Activated CD4-positive, alpha-beta memory T cell treated with anti-CD3 and anti-CD28 coated beads for 36 hours (primary cell): ENCODE measurements at regions of chr12 and their contacts with region 1.

Region 1: DNA sequence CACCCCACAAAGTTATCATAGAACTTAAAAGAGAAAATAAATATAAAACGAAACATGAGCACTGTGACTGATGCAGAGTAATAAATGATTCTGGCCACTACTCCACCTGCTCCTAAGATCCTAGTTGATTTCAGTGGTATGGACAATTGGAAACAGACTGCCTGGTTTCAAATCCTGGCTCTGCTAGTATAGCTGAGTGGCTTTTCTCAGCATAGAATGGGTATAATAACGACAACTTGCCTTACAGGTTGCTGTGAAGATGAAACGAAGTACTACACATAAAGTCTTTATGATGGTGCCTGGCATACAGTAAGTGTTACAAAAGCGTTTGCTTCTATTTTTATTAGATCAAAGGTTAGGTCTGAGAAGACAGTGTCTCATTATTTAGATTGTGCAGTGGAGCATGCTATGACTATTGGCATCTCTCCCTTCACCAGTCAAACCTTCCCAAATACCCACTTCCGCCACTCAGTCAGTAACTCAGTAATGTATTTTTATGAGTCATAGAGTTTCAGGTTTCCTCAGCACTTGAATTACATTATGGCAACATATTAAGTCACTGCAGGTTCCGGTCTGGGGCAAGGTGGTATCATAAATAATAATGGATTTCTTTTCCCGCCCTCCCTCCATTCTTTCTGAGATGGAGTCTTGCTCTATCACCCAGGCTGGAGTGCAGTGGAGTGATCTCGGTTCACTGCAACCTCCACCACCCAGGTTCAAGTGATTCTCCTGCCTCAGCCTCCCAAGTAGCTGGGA is 29.7 kb upstream of the NR2C1 start:
- DNase-seq: peak; percentile 68
- H3K4me3 Mint-ChIP-seq: no peak overlapping the region
- H3K27ac Mint-ChIP-seq: peak overlapping the region; percentile 63
- H3K4me1 Mint-ChIP-seq: peaks cover 19% of the 10 kb centered on the region
- H3K27me3 Mint-ChIP-seq: no peaks in the 10 kb centered on the region

Region 2: DNA sequence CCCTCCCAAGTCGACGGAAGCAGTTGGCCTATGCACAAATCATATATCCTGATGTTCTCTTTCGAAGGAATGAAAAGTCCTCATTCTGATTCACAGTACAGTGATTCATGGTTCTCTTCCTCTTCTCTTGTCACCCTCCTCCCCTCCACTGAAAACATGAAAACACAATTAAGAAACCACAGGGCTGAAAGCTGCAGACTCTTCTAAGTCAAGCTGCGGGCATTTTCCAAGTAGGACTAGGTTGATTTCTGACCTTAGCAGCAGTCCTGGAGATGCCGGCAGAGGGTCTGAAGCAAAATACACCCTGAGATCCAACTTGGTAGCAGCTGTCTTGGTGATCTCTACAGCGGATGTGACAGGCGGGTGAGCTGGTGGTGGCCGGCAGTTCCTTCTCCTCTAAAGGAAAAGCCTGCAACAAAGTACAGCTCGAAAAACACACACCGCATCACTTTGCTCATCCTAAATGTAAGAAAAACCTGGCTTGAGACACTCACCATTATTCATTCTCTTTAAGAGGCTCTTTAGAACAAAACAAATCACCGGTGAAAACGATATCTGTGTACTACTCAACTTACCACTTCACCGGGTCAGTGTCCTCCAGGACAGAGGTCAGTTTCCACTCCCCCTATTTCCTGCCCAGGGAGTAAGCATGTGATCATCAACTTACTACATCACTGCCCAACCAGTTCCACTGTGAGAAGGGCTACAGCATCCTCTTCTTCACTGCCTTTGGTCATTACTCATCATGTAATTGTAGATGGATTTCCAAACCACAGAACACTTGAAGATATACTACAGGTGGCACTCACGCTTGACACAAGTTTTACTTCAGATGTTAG is 458.7 kb before region 1 on chr12:
- CTCF ChIA-PET with region 1: no interaction called
- POLR2A ChIA-PET with region 1: no interaction called
- intact Hi-C with region 1: loop called (anchors 1 kb)
- DNase-seq: peak; percentile 24
- H3K4me3 Mint-ChIP-seq: no peak overlapping the region
- H3K27ac Mint-ChIP-seq: peak overlapping the region; percentile 65
- H3K4me1 Mint-ChIP-seq: peaks cover 37% of the 10 kb centered on the region
- H3K27me3 Mint-ChIP-seq: peaks cover 48% of the 10 kb centered on the region

Region 3: GRCh38 chr12:95003213-95003920 is 99.7 kb before region 1 on chr12 and contains the start of gene NDUFA12:
- CTCF ChIA-PET with region 1: no interaction called
- POLR2A ChIA-PET with region 1: no interaction called
- intact Hi-C with region 1: loop called (anchors 1 kb)
- DNase-seq: peak; percentile 97
- H3K4me3 Mint-ChIP-seq: peak within 1 kb of the TSS; percentile 91
- H3K27ac Mint-ChIP-seq: peak within 1 kb of the TSS; percentile 87
- H3K4me1 Mint-ChIP-seq: peaks cover 40% of the 10 kb centered on the region
- H3K27me3 Mint-ChIP-seq: no peaks in the 10 kb centered on the region
- total RNA-seq, gene NDUFA12: 150 to 156 TPM

Region 4: GRCh38 chr12:95085612-95086011 is 17.5 kb before region 1 on chr12:
- CTCF ChIA-PET with region 1: no interaction called
- POLR2A ChIA-PET with region 1: no interaction called
- intact Hi-C with region 1: loop called (anchors 1 kb)
- DNase-seq: no peak
- H3K4me3 Mint-ChIP-seq: no peak overlapping the region
- H3K27ac Mint-ChIP-seq: no peak overlapping the region
- H3K4me1 Mint-ChIP-seq: peaks cover 8% of the 10 kb centered on the region
- H3K27me3 Mint-ChIP-seq: no peaks in the 10 kb centered on the region

Region 5: GRCh38 chr12:95396849-95397468 is 293.9 kb after region 1 on chr12:
- CTCF ChIA-PET with region 1: interaction called, 3 read pairs
- POLR2A ChIA-PET with region 1: no interaction called
- intact Hi-C with region 1: loop called (anchors 1 kb)
- DNase-seq: peak; percentile 16
- H3K4me3 Mint-ChIP-seq: no peak overlapping the region
- H3K27ac Mint-ChIP-seq: peak overlapping the region; percentile 57
- H3K4me1 Mint-ChIP-seq: peaks cover 14% of the 10 kb centered on the region
- H3K27me3 Mint-ChIP-seq: peaks cover 29% of the 10 kb centered on the region

Region 6: GRCh38 chr12:95548539-95549391 is 445.7 kb after region 1 on chr12:
- CTCF ChIA-PET with region 1: no interaction called
- POLR2A ChIA-PET with region 1: no interaction called
- intact Hi-C with region 1: no loop called
- DNase-seq: peak; percentile 71
- H3K4me3 Mint-ChIP-seq: peak overlapping the region; percentile 85
- H3K27ac Mint-ChIP-seq: peak overlapping the region; percentile 7
- H3K4me1 Mint-ChIP-seq: peaks cover 26% of the 10 kb centered on the region
- H3K27me3 Mint-ChIP-seq: peaks cover 20% of the 10 kb centered on the region